ENCODE measurements at regions of chr1 and their contacts with region 1.

Region 1: DNA sequence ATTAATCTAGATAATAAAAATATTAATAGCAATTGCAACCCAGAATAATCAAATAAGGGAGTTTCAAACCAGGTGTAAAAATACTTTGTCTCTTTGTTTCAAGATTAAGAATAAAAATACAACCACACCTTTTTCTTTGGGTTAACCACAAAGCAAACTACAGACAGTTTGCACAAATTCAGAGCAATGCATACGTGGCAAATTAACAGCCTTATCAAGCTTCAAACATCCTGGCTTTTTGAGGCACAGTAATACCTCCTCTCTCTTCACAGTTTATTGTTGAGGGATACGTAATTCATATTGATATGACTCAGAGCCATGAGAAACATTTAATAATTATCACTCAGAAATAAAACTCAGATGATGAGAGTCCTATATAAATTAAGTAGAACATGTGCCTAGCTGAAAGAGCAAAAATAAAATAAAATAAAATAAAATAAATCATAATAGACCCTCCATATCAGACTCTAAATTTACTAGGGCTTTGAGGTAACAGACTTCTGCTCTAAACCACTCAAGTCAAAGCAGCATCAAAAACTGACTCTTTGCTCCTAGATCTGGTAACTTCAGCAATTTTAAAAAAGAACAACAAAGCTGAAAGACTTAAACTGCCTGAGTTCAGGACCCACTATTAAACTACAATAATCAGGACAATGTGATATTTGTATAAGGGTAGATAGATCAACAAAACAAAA is 11.4 kb downstream of the EDEM3 start:
- DNase-seq: peak in 4 of 9 experiments; percentile 15 to 85 (median 48)
- ATAC-seq: peak; percentile 97
- H3K4me3 ChIP-seq: no peak overlapping the region
- H3K4me3 Mint-ChIP-seq: peak overlapping the region; percentile 69
- H3K27ac ChIP-seq: peak overlapping the region; percentile 18 to 28
- H3K27ac Mint-ChIP-seq: peak overlapping the region; percentile 96
- H3K4me1 ChIP-seq: peaks cover 48% of the 10 kb centered on the region
- H3K4me1 Mint-ChIP-seq: peaks cover 68% of the 10 kb centered on the region
- H3K27me3 ChIP-seq: no peaks in the 10 kb centered on the region
- H3K27me3 Mint-ChIP-seq: no peaks in the 10 kb centered on the region
- CTCF ChIP-seq: no peak

Region 2: GRCh38 chr1:184242507-184242943 is 500.7 kb before region 1 on chr1:
- CTCF ChIA-PET with region 1: no interaction called
- POLR2A ChIA-PET with region 1: no interaction called
- intact Hi-C with region 1: no loop called
- DNase-seq: no peak
- ATAC-seq: no peak
- H3K4me3 ChIP-seq: no peak overlapping the region
- H3K4me3 Mint-ChIP-seq: no peak overlapping the region
- H3K27ac ChIP-seq: no peak overlapping the region
- H3K27ac Mint-ChIP-seq: no peak overlapping the region
- H3K4me1 ChIP-seq: no peaks in the 10 kb centered on the region
- H3K4me1 Mint-ChIP-seq: no peaks in the 10 kb centered on the region
- H3K27me3 ChIP-seq: no peaks in the 10 kb centered on the region
- H3K27me3 Mint-ChIP-seq: peaks cover 6% of the 10 kb centered on the region
- CTCF ChIP-seq: no peak

Region 3: DNA sequence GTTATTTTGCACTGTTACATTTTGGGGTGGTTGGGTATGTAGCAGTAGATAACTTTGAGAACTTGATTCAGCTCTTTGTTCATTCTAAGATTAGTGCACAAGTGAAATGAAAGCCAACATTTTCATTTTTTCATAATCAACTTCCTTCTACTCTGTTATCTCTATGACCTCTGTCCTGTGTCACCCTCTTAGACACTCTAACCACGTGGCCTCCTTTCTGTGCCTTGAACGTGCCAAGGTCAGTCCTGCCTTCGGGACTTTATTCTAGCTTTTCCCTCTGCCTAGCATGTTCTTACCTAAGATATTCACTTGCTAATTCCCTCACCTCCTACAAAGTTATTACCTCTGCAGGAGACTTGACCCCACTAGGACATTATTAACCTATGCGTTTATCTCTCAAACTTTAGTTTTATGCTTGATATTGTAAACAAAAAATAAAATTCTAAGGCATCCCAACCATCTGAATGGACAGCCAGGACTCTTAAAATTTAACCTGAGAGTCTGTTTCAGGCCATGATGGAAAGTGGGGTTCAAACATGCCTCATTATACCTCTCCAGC is 30.6 kb after region 1 on chr1:
- CTCF ChIA-PET with region 1: no interaction called
- POLR2A ChIA-PET with region 1: no interaction called
- intact Hi-C with region 1: no loop called
- DNase-seq: no peak
- ATAC-seq: no peak
- H3K4me3 ChIP-seq: no peak overlapping the region
- H3K4me3 Mint-ChIP-seq: no peak overlapping the region
- H3K27ac ChIP-seq: no peak overlapping the region
- H3K27ac Mint-ChIP-seq: no peak overlapping the region
- H3K4me1 ChIP-seq: no peaks in the 10 kb centered on the region
- H3K4me1 Mint-ChIP-seq: peaks cover 2% of the 10 kb centered on the region
- H3K27me3 ChIP-seq: no peaks in the 10 kb centered on the region
- H3K27me3 Mint-ChIP-seq: no peaks in the 10 kb centered on the region
- CTCF ChIP-seq: no peak

Region 4: GRCh38 chr1:184788970-184789369 is 45.8 kb after region 1 on chr1:
- CTCF ChIA-PET with region 1: no interaction called
- POLR2A ChIA-PET with region 1: no interaction called
- intact Hi-C with region 1: no loop called
- DNase-seq: no peak
- ATAC-seq: no peak
- H3K4me3 ChIP-seq: no peak overlapping the region
- H3K4me3 Mint-ChIP-seq: no peak overlapping the region
- H3K27ac ChIP-seq: no peak overlapping the region
- H3K27ac Mint-ChIP-seq: no peak overlapping the region
- H3K4me1 ChIP-seq: no peaks in the 10 kb centered on the region
- H3K4me1 Mint-ChIP-seq: peaks cover 2% of the 10 kb centered on the region
- H3K27me3 ChIP-seq: no peaks in the 10 kb centered on the region
- H3K27me3 Mint-ChIP-seq: no peaks in the 10 kb centered on the region
- CTCF ChIP-seq: no peak

Region 5: GRCh38 chr1:186375088-186375953 is 1632.1 kb after region 1 on chr1 and contains the starts of genes ODR4 and TPR:
- CTCF ChIA-PET with region 1: no interaction called
- POLR2A ChIA-PET with region 1: no interaction called
- intact Hi-C with region 1: loop called in 1 of 2 experiments (anchors 5 kb)
- DNase-seq: peak; percentile 91 to 99 (median 95)
- ATAC-seq: peak; percentile 89
- H3K4me3 ChIP-seq: peak within 1 kb of the TSS; percentile 65 to 82
- H3K4me3 Mint-ChIP-seq: peak within 1 kb of the TSS; percentile 98
- H3K27ac ChIP-seq: peak within 1 kb of the TSS; percentile 92 to 96
- H3K27ac Mint-ChIP-seq: peak within 1 kb of the TSS; percentile 97
- H3K4me1 ChIP-seq: peaks cover 24% of the 10 kb centered on the region
- H3K4me1 Mint-ChIP-seq: peaks cover 43% of the 10 kb centered on the region
- H3K27me3 ChIP-seq: no peaks in the 10 kb centered on the region
- H3K27me3 Mint-ChIP-seq: no peaks in the 10 kb centered on the region
- CTCF ChIP-seq: peak; percentile 66
- total RNA-seq, gene ODR4: 25.4 to 28.7 TPM
- total RNA-seq, gene TPR: 89.3 to 98.0 TPM

Measured in CD8-positive, alpha-beta T cell (primary cell).